B cell (primary cell): ENCODE measurements at regions of chr14 and their contacts with region 1.

Region 1: DNA sequence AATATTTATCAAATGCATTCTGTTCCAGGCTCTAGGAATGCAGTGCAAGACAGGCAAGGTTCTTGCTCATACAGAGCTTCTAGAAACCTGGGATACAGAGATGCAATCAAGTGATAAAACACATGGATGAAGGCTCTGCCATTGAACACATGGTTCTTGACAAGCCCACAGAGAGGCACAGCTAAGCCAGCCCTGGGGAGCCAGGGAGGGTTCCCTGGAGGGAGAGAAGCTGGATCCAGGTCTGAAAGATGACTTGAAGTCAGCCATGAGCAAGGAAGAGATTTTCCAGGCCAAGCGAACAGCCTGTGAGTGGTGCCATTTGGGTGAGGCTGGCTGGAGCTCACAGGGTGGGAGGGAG is 66.2 kb downstream of the IRF2BPL start:
- DNase-seq: no peak
- ATAC-seq: no peak
- H3K4me3 ChIP-seq: peak overlapping the region; percentile 22 to 57 (median 32)
- H3K4me3 Mint-ChIP-seq: peak overlapping the region; percentile 87
- H3K27ac ChIP-seq: peak overlapping the region; percentile 83 to 85
- H3K27ac Mint-ChIP-seq: peak overlapping the region; percentile 95
- H3K4me1 ChIP-seq: peaks cover 44 to 71% of the 10 kb centered on the region in 2 donors
- H3K4me1 Mint-ChIP-seq: peaks cover 72% of the 10 kb centered on the region
- H3K27me3 ChIP-seq: no peaks in the 10 kb centered on the region
- H3K27me3 Mint-ChIP-seq: no peaks in the 10 kb centered on the region
- CTCF ChIP-seq: no peak

Region 2: GRCh38 chr14:76227448-76228050 is 734.7 kb before region 1 on chr14:
- CTCF ChIA-PET with region 1: no interaction called
- POLR2A ChIA-PET with region 1: no interaction called
- intact Hi-C with region 1: no loop called
- DNase-seq: no peak
- ATAC-seq: no peak
- H3K4me3 ChIP-seq: no peak overlapping the region
- H3K4me3 Mint-ChIP-seq: no peak overlapping the region
- H3K27ac ChIP-seq: no peak overlapping the region
- H3K27ac Mint-ChIP-seq: no peak overlapping the region
- H3K4me1 ChIP-seq: no peaks in the 10 kb centered on the region
- H3K4me1 Mint-ChIP-seq: no peaks in the 10 kb centered on the region
- H3K27me3 ChIP-seq: no peaks in the 10 kb centered on the region
- H3K27me3 Mint-ChIP-seq: no peaks in the 10 kb centered on the region
- CTCF ChIP-seq: no peak

Region 3: GRCh38 chr14:76752744-76753143 is 209.5 kb before region 1 on chr14:
- CTCF ChIA-PET with region 1: no interaction called
- POLR2A ChIA-PET with region 1: no interaction called
- intact Hi-C with region 1: no loop called
- DNase-seq: no peak
- ATAC-seq: no peak
- H3K4me3 ChIP-seq: no peak overlapping the region
- H3K4me3 Mint-ChIP-seq: no peak overlapping the region
- H3K27ac ChIP-seq: no peak overlapping the region
- H3K27ac Mint-ChIP-seq: no peak overlapping the region
- H3K4me1 ChIP-seq: no peaks in the 10 kb centered on the region
- H3K4me1 Mint-ChIP-seq: no peaks in the 10 kb centered on the region
- H3K27me3 ChIP-seq: no peaks in the 10 kb centered on the region
- H3K27me3 Mint-ChIP-seq: peaks cover 17% of the 10 kb centered on the region
- CTCF ChIP-seq: no peak

Region 4: DNA sequence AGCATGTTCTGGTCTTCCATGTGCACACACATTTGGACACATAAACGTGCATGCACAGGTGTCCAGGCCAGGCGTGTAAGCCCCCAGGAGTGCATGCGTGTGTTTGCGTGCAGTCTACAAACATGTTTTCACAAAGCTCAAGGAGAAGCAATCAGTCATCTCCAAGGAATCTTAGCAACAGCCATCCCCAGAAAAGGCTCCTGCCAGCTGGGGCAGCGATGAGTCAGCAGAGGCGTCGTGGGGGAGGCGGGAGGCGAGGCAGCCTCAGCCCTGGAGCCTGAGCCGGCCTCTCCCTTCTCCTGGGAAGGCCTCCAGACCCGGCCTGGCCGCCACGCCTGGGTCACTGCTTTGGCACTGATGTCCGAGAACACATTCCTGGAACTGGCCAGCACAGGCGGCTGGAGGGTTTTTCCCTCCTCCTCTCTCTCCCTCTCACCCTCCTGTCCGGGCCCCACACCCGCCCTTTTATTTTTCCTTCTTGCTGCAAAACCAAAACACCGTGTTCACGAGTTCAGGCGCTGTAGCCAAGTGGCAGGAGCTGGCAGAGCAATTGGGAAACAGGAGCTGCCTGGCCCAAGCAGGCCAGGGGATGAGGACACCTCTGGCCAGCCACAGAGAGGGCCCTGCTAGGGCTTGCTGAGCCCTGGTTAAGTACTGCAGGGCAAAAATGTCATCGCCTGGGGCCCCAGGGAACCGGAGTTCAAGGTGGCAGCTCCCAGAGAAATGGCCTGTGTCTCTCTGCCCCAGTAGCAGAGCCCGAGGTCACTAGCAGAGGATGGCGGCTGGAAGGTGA is 43.3 kb before region 1 on chr14:
- CTCF ChIA-PET with region 1: interaction called, 21 read pairs
- POLR2A ChIA-PET with region 1: interaction called, 3 read pairs
- intact Hi-C with region 1: no loop called
- DNase-seq: no peak
- ATAC-seq: no peak
- H3K4me3 ChIP-seq: no peak overlapping the region
- H3K4me3 Mint-ChIP-seq: no peak overlapping the region
- H3K27ac ChIP-seq: no peak overlapping the region
- H3K27ac Mint-ChIP-seq: no peak overlapping the region
- H3K4me1 ChIP-seq: peaks cover 24 to 25% of the 10 kb centered on the region in 2 donors
- H3K4me1 Mint-ChIP-seq: peaks cover 20% of the 10 kb centered on the region
- H3K27me3 ChIP-seq: peaks cover 0 to 33% (median 5%) of the 10 kb centered on the region in 4 experiments
- H3K27me3 Mint-ChIP-seq: peaks cover 22% of the 10 kb centered on the region
- CTCF ChIP-seq: no peak

Region 5: DNA sequence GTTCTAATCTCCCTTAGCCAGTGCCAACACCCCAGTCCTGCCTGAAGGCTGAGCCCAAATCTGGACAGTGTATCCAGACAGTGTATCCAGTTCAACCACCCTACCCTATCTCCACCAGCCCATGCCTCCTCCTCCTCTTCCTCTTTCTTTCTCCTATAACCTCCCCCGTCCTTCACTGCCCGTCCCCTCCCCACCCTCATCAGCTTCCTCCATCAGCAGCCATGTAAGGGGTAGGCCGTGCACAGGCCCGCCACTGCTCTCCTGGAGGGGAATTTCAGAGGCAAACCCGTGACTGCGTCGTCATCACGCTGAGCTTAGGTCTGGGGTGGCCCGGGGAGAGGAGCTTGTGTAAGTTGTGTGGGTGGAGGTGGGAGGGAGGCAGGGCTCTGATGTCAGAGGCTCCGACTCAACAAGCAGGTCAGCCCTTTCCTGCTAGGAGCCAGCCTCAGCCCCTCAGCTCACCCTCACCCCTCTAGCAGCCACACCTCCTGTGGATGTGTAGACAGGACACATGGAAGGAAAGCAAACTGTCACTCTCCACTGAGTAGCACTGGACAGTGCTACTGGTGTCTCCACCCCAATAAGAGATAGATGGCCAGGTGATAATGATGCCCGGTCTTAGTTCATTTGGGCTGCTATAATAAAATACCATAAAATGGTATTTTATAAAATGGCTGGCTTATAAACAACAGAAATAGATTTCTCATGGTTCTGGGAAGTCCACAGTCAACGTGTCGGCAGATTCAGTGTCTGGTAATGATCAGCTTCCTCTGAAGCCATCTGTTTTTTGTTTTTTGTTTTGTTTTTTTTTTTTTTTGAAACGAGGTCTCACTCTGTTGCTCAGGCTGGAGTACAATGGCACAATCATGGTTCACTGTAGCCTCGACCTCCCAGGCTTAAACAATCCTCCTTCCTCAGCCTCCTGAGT is 15.8 kb after region 1 on chr14:
- CTCF ChIA-PET with region 1: interaction called, 12 read pairs
- POLR2A ChIA-PET with region 1: interaction called, 21 read pairs
- intact Hi-C with region 1: loop called (anchors 1 kb)
- DNase-seq: peak; percentile 96
- ATAC-seq: peak; percentile 94
- H3K4me3 ChIP-seq: no peak overlapping the region
- H3K4me3 Mint-ChIP-seq: peak overlapping the region; percentile 79
- H3K27ac ChIP-seq: peak overlapping the region; percentile 75 to 82
- H3K27ac Mint-ChIP-seq: peak overlapping the region; percentile 93
- H3K4me1 ChIP-seq: peaks cover 18 to 25% of the 10 kb centered on the region in 2 donors
- H3K4me1 Mint-ChIP-seq: peaks cover 25% of the 10 kb centered on the region
- H3K27me3 ChIP-seq: no peaks in the 10 kb centered on the region
- H3K27me3 Mint-ChIP-seq: no peaks in the 10 kb centered on the region
- CTCF ChIP-seq: no peak

Region 6: DNA sequence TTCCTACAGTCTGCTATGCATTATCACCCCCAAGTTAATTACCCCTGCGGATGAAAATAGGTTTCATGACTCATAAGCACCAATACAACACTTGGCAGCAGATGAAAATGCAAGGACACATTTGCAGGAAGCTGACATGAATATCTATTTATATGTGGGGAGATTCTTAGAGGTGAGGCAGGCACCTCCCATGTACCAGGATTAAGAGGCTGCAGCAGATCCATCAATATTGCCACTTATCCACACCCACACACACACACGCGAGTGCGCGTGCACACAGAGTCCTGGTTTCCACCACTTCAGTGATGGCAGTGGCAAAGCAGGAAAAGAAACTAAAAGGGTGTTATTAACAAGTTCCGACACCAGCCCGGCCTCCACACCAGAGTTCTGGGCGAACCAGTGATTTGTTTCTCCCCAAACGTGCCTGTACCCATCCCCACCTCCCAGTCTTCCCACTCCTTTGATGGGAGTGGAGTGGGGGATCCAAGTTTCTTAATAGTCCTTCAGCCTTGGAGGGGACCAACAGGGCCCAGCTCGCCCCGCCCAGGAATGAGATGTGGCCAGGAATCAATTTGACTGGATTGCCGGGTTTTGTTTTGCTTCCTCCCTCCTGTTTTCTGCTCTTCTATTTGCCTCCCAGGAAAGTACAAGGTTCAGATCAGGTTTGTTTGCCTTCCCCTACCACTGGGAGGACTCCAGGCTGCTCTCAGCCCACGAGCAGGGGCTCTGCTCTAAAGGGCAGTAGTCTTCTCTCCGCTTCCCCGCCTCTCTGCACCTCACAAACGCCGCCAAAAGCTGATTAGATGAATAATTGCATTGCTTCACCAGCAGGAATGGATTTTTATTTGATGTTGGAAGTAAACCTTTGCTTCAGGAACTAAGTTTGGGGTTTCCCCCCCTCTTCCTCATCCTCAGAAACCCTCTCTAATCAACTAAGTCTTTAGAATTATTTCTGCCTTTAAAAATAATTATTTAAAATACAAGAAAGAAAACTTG is 61.0 kb after region 1 on chr14:
- CTCF ChIA-PET with region 1: interaction called, 33 read pairs
- POLR2A ChIA-PET with region 1: interaction called, 54 read pairs
- intact Hi-C with region 1: loop called (anchors 1 kb)
- DNase-seq: no peak
- ATAC-seq: no peak
- H3K4me3 ChIP-seq: no peak overlapping the region
- H3K4me3 Mint-ChIP-seq: no peak overlapping the region
- H3K27ac ChIP-seq: no peak overlapping the region
- H3K27ac Mint-ChIP-seq: no peak overlapping the region
- H3K4me1 ChIP-seq: peaks cover 23 to 29% of the 10 kb centered on the region in 2 donors
- H3K4me1 Mint-ChIP-seq: peaks cover 33% of the 10 kb centered on the region
- H3K27me3 ChIP-seq: no peaks in the 10 kb centered on the region
- H3K27me3 Mint-ChIP-seq: no peaks in the 10 kb centered on the region
- CTCF ChIP-seq: no peak

Region 7: DNA sequence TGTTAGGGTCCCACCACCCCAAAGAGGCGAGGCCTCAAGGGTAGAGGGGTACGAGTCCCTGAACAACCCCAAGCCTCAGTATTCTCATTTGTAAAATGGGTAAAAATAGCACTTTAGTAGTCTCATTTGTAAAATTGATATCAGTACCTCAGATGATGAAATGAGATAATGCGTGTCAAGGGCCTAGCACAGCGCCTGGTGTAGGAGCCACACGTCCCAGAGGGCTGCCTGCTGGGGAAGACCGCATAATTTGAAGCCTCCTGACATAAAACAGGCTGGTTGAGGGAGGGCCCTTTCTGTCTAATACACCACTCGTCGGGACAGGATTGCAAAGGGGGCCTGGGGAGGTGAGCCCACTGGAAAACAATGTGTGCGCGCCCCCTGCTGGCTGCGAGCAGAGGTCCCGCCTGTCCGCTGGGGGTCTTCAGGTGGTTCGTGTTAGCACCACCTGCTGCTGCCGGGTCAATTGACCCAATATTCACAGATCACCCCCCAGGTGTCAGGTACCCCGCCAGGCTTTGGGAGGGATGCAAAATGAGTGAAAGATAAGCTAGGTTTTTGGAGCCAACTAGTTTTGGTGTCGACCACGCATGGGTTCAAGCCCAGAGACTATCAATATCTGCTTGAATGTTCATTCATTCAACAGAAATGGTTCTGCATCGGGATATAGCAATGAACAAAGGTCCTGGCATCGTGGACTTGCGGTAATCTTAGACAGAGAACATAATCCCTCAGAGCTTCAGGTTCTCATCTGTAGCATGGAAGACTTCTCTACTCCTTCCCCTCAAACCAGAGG is 91.0 kb after region 1 on chr14:
- CTCF ChIA-PET with region 1: interaction called, 16 read pairs
- POLR2A ChIA-PET with region 1: interaction called, 5 read pairs
- intact Hi-C with region 1: no loop called
- DNase-seq: peak; percentile 89
- ATAC-seq: peak; percentile 94
- H3K4me3 ChIP-seq: no peak overlapping the region
- H3K4me3 Mint-ChIP-seq: no peak overlapping the region
- H3K27ac ChIP-seq: no peak overlapping the region
- H3K27ac Mint-ChIP-seq: no peak overlapping the region
- H3K4me1 ChIP-seq: peaks cover 11 to 15% of the 10 kb centered on the region in 2 donors
- H3K4me1 Mint-ChIP-seq: peaks cover 7% of the 10 kb centered on the region
- H3K27me3 ChIP-seq: no peaks in the 10 kb centered on the region
- H3K27me3 Mint-ChIP-seq: no peaks in the 10 kb centered on the region
- CTCF ChIP-seq: peak; percentile 95